ENCODE measurements at regions of chr18 and their contacts with region 1.

Region 1: DNA sequence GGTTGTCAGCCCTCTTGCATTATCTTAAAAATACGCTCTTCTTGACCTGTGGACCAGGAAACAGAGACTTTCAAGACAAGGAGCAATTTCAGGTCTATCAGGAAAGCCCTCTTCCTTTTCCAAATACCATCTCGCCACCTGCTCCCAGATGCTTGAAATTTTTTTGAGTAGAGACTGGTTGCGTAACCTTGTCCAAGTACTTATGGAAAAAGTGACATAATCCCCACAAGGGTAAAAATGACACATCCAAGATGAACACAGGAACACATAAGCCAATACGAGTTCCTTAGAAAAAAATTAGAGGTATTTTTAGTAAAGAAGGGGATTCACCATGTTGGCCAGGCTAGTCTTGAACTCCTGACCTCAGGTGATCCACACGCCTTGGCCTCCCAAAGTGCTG is 1.7 kb downstream of the SERPINB13 start:
- DNase-seq: no peak
- CTCF ChIP-seq: no peak

Region 2: GRCh38 chr18:63539904-63540510 is 48.9 kb before region 1 on chr18:
- in situ Hi-C with region 1: no loop called
- DNase-seq: no peak
- CTCF ChIP-seq: no peak

Region 3: GRCh38 chr18:63831080-63831788 is 242.3 kb after region 1 on chr18:
- in situ Hi-C with region 1: loop called (anchors 10 kb)
- DNase-seq: no peak
- CTCF ChIP-seq: no peak